Prostate gland (tissue), 2 donors: ENCODE measurements at regions of chr18 and their contacts with region 1.

Region 1: GRCh38 chr18:61471942-61472341 is 138.7 kb downstream of the CDH20 start:
- DNase-seq: no peak
- H3K4me3 ChIP-seq: no peak overlapping the region
- H3K27ac ChIP-seq: no peak overlapping the region
- H3K4me1 ChIP-seq: no peaks in the 10 kb centered on the region
- H3K27me3 ChIP-seq: no peaks in the 10 kb centered on the region
- CTCF ChIP-seq: no peak
- POLR2A ChIP-seq: no peak

Region 2: DNA sequence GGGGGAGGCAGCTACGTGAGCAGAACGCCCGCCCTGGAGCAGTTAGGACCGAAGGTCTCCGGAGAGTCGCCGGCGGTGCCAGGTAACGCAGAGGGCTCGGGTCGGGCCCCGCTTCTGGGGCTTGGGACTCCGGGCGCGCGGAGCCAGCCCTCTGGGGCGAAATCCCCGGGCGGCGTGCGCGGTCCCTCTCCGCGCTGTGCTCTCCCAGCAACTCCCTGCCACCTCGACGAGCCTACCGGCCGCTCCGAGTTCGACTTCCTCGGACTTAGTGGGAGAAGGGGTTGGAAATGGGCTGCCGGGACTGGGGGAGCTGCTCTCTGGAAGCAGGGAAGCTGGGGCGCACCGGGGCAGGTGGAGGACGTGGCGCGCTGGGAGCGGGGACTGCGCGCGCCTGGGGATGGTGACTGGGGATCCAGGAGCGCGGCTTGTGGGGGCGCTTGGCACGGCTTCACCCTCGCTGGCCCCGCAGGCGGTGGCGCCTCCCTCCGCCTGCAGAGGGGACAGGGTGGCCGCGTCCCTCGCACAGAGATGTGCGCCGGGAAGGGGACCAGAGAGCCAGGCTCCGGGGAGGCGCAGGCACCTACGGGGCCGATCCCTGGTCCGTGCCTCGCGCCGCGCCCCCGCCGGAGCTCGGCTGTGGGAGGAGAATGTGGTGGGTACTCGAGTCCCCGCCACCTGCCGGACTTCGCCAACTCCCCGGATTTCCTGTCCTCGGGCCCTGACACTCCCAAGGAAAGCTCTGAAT is 138.0 kb before region 1 on chr18:
- intact Hi-C with region 1: loop called (anchors 10 kb)
- DNase-seq: no peak
- H3K4me3 ChIP-seq: peak overlapping the region; percentile 10 to 15
- H3K27ac ChIP-seq: no peak overlapping the region
- H3K4me1 ChIP-seq: no peaks in the 10 kb centered on the region
- H3K27me3 ChIP-seq: peaks cover 13% of the 10 kb centered on the region
- CTCF ChIP-seq: no peak
- POLR2A ChIP-seq: no peak

Region 3: DNA sequence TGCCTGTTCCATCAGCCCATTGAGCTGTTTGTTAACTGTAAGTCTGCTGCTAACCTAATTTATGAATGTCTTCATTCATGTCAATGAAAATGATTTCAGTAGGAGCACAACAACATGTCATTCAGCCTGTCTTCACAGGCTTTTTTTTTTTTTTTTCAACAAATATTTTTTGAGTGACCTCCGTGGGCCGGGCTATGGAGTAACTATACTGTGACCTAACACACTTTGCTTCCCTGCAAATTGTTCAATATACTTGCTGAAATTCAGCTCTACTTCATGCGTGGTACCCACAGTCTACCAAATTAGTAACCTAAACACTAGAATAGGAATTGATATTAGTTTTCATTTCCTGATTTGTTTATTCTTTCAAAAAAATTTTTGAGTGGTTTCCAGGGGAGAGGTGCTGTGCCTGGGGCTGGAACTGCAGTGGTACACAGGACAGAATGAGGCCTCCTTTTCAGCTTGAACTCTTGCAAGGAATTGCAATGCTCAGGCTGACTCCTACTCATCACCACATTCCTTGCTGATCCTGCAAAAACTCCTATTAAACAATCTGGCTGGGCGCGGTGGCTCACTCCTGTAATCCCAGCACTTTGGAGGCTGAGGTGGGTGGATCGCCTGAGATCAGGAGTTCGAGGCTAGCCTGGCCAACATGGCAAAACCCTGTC is 51.6 kb before region 1 on chr18:
- intact Hi-C with region 1: no loop called
- DNase-seq: no peak
- H3K4me3 ChIP-seq: no peak overlapping the region
- H3K27ac ChIP-seq: no peak overlapping the region
- H3K4me1 ChIP-seq: no peaks in the 10 kb centered on the region
- H3K27me3 ChIP-seq: no peaks in the 10 kb centered on the region
- CTCF ChIP-seq: no peak
- POLR2A ChIP-seq: no peak